PC-9 (cell line): ENCODE measurements at regions of chr2 and their contacts with region 1.

Region 1: DNA sequence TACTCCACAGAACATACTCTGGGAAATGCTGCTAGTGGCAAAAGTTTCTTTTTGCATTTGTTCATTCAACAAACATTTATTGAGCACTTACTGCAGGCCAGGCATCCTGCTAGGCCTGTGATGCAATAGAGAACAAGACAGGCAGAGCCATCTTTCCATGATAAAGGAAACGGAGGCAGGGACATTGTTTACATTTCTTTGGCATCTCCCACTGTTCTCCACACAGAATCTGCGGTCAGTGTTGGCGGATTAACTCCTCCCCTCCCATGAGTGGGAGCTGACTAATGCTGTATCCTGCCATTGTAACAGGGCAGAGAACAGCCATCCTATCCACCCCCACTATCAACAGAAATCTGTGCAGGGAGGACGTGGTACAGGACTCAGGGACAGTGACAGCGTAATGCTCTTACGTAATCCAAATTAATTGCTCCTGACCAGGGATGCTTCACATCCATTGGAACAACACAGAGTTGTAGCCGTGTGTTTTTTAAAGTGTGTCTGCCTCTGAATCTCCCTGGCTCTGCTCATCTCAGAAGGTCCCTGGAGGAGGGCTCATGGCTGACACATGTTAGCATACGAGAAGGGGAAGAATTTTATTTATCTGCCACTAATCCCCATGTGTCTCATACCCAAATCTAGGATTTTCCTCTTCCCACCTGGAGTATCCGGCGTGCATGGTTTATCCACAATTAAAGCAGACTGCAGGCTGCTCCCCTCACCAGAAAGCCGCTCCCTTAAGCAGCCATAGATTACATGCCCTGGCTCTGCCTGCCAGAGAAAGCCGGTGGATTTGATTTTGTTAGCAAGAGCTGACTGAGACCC is 32.3 kb downstream of the STEAP3 start:
- DNase-seq: peak; percentile 48 to 65
- H3K4me3 ChIP-seq: no peak overlapping the region
- H3K27ac ChIP-seq: 0 out of 2 replicates have a peak overlapping the region, but pooled peaks have one; percentile 6
- H3K4me1 ChIP-seq: peaks cover 51% of the 10 kb centered on the region
- H3K27me3 ChIP-seq: no peaks in the 10 kb centered on the region
- CTCF ChIP-seq: no peak

Region 2: DNA sequence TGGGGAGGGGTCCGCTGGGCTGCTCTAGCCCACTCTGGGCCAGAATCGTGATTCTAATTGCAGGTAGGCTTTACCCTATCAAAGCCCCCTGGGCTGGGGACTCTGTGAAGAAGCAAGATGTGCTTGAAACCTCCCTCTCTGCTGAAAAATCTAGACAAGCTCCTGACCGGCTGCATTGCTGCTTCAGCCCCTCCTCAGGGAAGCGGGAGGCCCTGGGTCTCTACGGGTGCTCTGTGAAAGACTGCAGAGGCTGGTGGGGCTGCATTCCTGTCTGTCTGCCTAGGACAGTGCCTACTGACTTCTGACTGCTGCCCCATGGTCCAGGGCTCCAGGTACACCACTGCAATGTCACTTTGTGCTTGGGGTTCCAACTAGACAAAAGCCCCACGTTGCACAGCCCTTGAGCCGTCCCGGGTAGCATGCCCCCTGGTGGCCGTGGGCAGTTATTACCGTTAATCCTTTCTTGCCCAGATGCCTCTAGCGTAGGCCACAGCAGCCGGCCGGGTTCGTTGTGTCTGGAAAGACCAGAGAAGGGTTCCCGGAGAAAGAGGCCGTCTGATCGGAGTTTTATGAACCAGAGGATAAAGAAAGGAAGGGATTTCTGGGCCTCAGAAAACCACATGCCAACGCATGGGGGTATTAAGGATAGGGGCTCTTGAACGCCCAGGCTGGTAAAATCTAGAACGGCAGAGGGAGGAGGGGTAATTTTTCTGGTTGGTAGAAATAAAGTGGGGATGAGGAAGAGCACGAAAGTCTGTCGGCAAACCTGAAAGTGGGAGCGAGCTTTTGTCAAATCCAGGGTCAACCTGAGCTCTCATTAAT is 81.5 kb before region 1 on chr2:
- CTCF ChIA-PET with region 1: interaction called, 9 read pairs
- POLR2A ChIA-PET with region 1: no interaction called
- intact Hi-C with region 1: loop called (anchors 2 kb)
- DNase-seq: peak in 1 of 2 experiments; percentile 43
- H3K4me3 ChIP-seq: no peak overlapping the region
- H3K27ac ChIP-seq: no peak overlapping the region
- H3K4me1 ChIP-seq: peaks cover 5% of the 10 kb centered on the region
- H3K27me3 ChIP-seq: peaks cover 4% of the 10 kb centered on the region; the same call in 1 of the 2 replicates
- CTCF ChIP-seq: peak; percentile 95